Right ventricle myocardium inferior (tissue), 1 donor: ENCODE measurements at regions of chr15 and their contacts with region 1.

Region 1: DNA sequence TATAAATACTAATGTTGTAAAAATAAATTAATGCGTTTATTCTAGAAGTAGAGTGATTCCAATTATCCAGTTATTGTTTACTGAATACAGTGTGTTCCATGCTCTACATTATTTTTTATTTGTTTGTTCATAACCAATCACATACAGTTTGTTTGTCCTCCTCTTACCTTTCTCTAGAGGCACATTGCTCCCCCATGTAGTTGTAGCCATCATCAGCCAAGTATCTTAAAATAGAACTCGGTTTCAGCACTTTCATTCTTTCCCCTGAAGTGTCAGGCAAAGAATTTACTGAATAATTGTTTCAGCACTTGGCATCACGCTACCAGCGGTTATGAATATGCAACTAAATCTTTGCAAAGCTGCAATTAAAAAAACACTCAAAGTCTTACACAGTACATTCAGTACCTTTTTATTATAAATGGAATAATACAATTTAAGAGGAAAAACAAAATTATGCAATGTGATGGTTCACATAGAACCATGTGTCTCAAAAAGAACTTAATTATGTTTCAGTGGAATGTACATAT is 448.6 kb upstream of the ATP10A start:
- DNase-seq: no peak
- ATAC-seq: peak; percentile 57

Region 2: GRCh38 chr15:26177816-26178215 is 134.0 kb before region 1 on chr15:
- intact Hi-C with region 1: no loop called
- DNase-seq: no peak
- ATAC-seq: no peak

Region 3: GRCh38 chr15:26259581-26259980 is 52.2 kb before region 1 on chr15:
- intact Hi-C with region 1: loop called (anchors 10 kb)
- DNase-seq: no peak
- ATAC-seq: no peak

Region 4: DNA sequence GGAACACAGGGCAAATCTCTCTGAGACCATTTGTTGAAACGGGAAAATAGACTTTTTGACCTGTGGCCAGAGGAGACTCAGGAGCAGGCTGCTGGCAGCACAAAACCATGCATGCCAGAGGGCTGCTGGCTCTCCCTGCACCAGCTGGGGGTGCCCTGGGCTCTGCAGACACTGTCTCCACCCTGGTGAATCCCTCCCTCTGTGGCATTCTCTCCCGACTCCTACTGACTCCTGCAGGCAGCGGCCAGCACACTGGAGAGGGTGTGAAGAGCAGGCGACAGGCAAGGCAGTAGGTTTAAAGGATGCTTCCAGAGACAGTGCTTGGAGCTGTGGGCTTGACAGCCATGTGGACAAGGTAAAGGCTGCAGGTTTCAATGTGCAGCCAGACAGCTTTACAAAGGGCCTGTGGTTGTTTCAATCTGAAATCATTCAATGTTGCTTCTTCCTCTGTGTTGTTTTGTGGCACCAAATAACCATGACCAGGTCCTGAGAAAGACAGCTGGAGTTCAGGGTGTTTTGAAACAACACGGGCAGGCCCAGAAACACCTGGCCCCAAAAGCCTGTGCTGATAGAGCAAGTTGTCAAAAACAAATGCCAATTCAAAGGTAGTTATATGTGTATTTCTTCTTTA is 17.6 kb before region 1 on chr15:
- intact Hi-C with region 1: no loop called
- DNase-seq: peak; percentile 75
- ATAC-seq: peak; percentile 95